ENCODE measurements at regions of chrX and their contacts with region 1.

Region 1: GRCh38 chrX:37926700-37927099 is 79.3 kb upstream of the DYNLT3 start:
- DNase-seq: peak; percentile 41
- ATAC-seq: peak; percentile 76
- H3K4me3 ChIP-seq: no peak overlapping the region
- H3K27ac ChIP-seq: no peak overlapping the region
- H3K4me1 ChIP-seq: no peaks in the 10 kb centered on the region
- H3K27me3 ChIP-seq: no peaks in the 10 kb centered on the region
- CTCF ChIP-seq: peak; percentile 61
- POLR2A ChIP-seq: no peak
- RAD21 ChIP-seq: peak; percentile 59

Region 2: DNA sequence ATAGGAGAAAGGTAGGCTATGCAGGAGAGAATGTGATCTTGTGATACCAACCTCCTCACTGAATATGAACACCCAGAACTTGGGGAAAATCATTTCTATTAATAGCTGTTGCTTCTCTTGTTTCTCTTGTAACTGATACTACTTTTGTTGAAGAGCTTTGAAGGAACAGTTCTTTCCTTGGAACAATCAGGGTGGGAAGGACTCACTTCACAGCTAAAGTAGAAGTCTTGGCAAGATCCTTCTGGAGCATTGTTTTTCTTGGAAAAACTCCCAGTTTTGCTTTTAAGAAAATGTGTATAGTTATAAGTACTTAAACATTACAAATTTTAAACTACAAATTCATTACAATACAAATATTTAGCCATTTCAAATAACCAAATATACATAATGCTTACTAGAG is 260.2 kb before region 1 on chrX:
- CTCF ChIA-PET with region 1: no interaction called
- POLR2A ChIA-PET with region 1: no interaction called
- dilution Hi-C with region 1: no loop called
- in situ Hi-C with region 1: no loop called
- intact Hi-C with region 1: no loop called
- DNase-seq: no peak
- ATAC-seq: no peak
- H3K4me3 ChIP-seq: no peak overlapping the region
- H3K27ac ChIP-seq: no peak overlapping the region
- H3K4me1 ChIP-seq: no peaks in the 10 kb centered on the region
- H3K27me3 ChIP-seq: peaks cover 4% of the 10 kb centered on the region
- CTCF ChIP-seq: no peak
- POLR2A ChIP-seq: no peak
- RAD21 ChIP-seq: no peak

Region 3: GRCh38 chrX:38166478-38167083 is 239.9 kb after region 1 on chrX:
- CTCF ChIA-PET with region 1: interaction called, 9 read pairs
- POLR2A ChIA-PET with region 1: no interaction called
- dilution Hi-C with region 1: no loop called
- in situ Hi-C with region 1: loop called (anchors 5 kb)
- intact Hi-C with region 1: loop called (anchors 1 kb)
- DNase-seq: peak; percentile 26
- ATAC-seq: no peak
- H3K4me3 ChIP-seq: no peak overlapping the region
- H3K27ac ChIP-seq: no peak overlapping the region
- H3K4me1 ChIP-seq: no peaks in the 10 kb centered on the region
- H3K27me3 ChIP-seq: no peaks in the 10 kb centered on the region
- CTCF ChIP-seq: peak; percentile 71
- POLR2A ChIP-seq: no peak
- RAD21 ChIP-seq: peak; percentile 57

Region 4: DNA sequence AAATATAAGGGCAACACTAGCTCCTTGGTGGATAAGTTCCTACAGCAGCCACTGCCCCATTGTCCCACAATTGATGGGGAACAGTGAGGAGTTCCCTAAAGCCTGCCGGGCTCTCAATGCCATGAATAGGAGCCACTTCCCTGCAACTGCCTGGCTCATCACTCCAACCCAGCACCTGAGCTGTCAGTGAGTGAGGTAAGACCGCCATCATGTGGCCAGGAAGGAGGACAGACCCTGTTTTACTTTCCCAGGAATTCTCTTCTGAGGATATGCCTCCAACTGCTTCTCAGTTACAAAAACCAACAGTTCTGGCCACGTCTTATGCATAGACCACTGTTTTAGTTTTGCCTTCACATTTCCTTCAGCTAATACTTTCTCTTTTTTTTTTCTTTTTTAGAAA is 248.4 kb after region 1 on chrX:
- CTCF ChIA-PET with region 1: no interaction called
- POLR2A ChIA-PET with region 1: no interaction called
- dilution Hi-C with region 1: no loop called
- in situ Hi-C with region 1: loop called (anchors 5 kb)
- intact Hi-C with region 1: loop called (anchors 2 kb)
- DNase-seq: peak; percentile 28
- ATAC-seq: peak; percentile 48; the same call in 1 of the 2 replicates
- H3K4me3 ChIP-seq: no peak overlapping the region
- H3K27ac ChIP-seq: no peak overlapping the region
- H3K4me1 ChIP-seq: no peaks in the 10 kb centered on the region
- H3K27me3 ChIP-seq: peaks cover 1% of the 10 kb centered on the region; the same call in 1 of the 2 replicates
- CTCF ChIP-seq: peak; percentile 53
- POLR2A ChIP-seq: no peak
- RAD21 ChIP-seq: peak; percentile 74

Region 5: DNA sequence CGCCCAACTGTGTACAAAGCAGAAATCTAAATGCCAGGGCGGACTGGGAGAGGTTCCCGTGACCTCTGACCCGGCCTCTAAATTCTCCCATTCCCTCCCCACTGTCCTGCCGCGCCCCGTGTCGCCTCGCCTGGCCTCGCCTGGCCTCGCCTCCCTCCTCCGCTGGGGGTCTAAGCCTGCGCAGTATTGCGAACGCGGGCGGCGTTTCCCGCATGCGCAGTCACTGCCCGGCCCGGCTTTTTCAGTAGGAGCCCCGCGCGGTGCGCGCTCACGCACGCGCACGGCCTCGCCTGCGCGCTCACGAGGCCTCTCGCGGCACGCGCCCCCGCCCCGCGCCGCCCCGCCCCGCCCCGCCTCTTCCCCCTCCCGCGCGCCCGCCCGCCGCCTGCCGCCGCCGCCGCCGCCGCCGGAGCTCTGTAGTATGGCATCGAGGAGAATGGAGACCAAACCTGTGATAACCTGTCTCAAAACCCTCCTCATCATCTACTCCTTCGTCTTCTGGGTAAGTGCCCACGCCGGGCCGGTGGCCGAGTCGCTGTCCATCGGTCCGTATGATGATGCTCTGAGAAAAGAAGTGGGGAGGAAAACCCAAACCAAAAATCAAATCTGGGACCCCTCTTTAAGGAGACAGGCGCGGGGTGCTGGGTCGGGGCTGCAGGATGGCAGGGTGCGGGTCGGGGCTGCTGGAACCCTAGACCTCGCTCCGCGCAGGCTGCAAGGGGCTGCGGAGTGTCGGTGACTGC is 634.6 kb after region 1 on chrX and contains the start of gene TSPAN7:
- CTCF ChIA-PET with region 1: no interaction called
- POLR2A ChIA-PET with region 1: no interaction called
- dilution Hi-C with region 1: no loop called
- in situ Hi-C with region 1: no loop called
- intact Hi-C with region 1: no loop called
- DNase-seq: peak; percentile 40
- ATAC-seq: peak; percentile 92
- H3K4me3 ChIP-seq: peak within 1 kb of the TSS; percentile 47
- H3K27ac ChIP-seq: no peak within 1 kb of the TSS
- H3K4me1 ChIP-seq: no peaks in the 10 kb centered on the region
- H3K27me3 ChIP-seq: no peaks in the 10 kb centered on the region; the same call in 1 of the 2 replicates
- CTCF ChIP-seq: no peak
- POLR2A ChIP-seq: no peak
- RAD21 ChIP-seq: no peak
- total RNA-seq, gene TSPAN7: not detected in 2 replicates

Measured in IMR-90 (cell line).